ENCODE measurements at regions of chr22 and their contacts with region 1.

Region 1: DNA sequence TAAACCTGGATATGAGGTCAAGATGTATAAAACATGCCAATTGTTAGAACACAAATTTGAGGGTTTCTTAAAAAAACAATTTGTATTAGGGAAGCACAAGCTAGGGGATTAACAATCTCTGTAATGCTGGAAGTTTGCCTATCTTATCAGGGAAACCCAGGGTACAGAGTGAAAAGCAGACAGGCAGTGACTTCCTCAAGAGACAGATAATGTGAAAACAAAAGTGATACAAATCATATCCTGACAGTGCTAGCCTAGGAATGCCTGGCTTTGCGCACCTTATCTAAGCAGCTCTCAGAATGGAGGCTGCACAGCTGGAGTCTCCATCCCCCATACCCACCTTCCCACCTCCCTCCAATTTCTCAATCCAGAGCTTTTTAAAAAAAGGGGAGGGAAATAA is 22.5 kb upstream of the RBX1 start:
- DNase-seq: no peak
- H3K4me3 ChIP-seq: no peak overlapping the region
- H3K27ac ChIP-seq: no peak overlapping the region
- H3K4me1 ChIP-seq: no peaks in the 10 kb centered on the region
- H3K27me3 ChIP-seq: no peaks in the 10 kb centered on the region
- CTCF ChIP-seq: no peak

Region 2: GRCh38 chr22:41479671-41480396 is 551.2 kb after region 1 on chr22:
- CTCF ChIA-PET with region 1: no interaction called
- POLR2A ChIA-PET with region 1: interaction called, 15 read pairs
- intact Hi-C with region 1: no loop called
- DNase-seq: no peak
- H3K4me3 ChIP-seq: no peak overlapping the region
- H3K27ac ChIP-seq: no peak overlapping the region
- H3K4me1 ChIP-seq: no peaks in the 10 kb centered on the region
- H3K27me3 ChIP-seq: no peaks in the 10 kb centered on the region
- CTCF ChIP-seq: no peak

Measured in PC-9 (cell line).